Vagina (tissue), 2 donors: ENCODE measurements at regions of chr19 and their contacts with region 1.

Region 1: GRCh38 chr19:44747739-44748425 is 626 bp upstream of the BCL3 start:
- DNase-seq: no peak
- H3K4me3 ChIP-seq: peak overlapping the region; percentile 63 to 87
- H3K27ac ChIP-seq: peak overlapping the region; percentile 93
- H3K4me1 ChIP-seq: peaks cover 75% of the 10 kb centered on the region
- H3K27me3 ChIP-seq: no peaks in the 10 kb centered on the region
- CTCF ChIP-seq: no peak
- POLR2A ChIP-seq: no peak

Region 2: DNA sequence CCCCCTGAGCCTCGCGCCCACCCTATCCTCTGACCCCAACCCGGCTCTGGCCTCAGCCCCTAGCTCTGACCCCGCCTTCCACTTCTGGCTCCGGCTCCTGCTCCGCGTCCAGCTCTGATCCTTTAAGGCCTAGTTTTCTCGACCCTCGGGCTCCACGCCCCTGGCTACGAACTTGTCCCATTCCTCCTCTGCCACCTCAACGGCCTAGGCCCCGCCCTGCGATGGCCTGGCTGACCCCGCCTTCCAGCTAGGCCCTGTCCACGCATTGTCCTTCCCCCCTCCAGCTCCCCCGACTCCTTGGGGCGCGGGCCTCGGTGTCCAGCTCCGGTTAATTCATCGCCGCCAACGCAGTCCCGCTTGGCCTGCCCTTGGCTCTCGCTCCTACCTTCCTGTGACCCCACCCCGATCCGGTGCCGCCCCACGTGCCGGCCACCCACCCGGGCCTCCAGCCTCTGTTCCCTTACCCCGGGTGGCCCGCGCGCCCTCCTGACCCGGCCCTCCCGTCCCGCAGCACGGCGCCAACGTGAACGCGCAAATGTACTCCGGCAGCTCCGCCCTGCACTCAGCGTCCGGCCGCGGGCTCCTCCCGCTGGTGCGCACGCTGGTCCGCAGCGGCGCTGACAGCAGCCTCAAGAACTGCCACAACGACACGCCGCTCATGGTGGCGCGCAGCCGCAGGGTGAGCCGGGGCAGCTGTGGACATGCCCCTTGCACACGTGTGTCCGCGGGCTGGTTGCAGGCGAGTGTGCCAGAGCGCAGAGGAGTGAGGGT is 10.0 kb after region 1 on chr19:
- intact Hi-C with region 1: loop called (anchors 1 kb)
- DNase-seq: no peak
- H3K4me3 ChIP-seq: peak overlapping the region; percentile 41 to 45
- H3K27ac ChIP-seq: peak overlapping the region; percentile 92
- H3K4me1 ChIP-seq: peaks cover 64% of the 10 kb centered on the region
- H3K27me3 ChIP-seq: no peaks in the 10 kb centered on the region
- CTCF ChIP-seq: no peak
- POLR2A ChIP-seq: no peak